ENCODE measurements at regions of chr17 and their contacts with region 1.

Region 1: GRCh38 chr17:27778193-27778592 is 22.1 kb downstream of the NOS2 start:
- DNase-seq: peak; percentile 81
- H3K4me3 ChIP-seq: no peak overlapping the region
- H3K27ac ChIP-seq: no peak overlapping the region
- H3K4me1 ChIP-seq: peaks cover 20% of the 10 kb centered on the region
- H3K27me3 ChIP-seq: no peaks in the 10 kb centered on the region
- CTCF ChIP-seq: no peak

Region 2: GRCh38 chr17:27793168-27793905 is 15.1 kb after region 1 on chr17:
- CTCF ChIA-PET with region 1: no interaction called
- dilution Hi-C with region 1: no loop called
- in situ Hi-C with region 1: no loop called
- intact Hi-C with region 1: no loop called
- DNase-seq: peak; percentile 8
- H3K4me3 ChIP-seq: no peak overlapping the region
- H3K27ac ChIP-seq: no peak overlapping the region
- H3K4me1 ChIP-seq: peaks cover 5% of the 10 kb centered on the region
- H3K27me3 ChIP-seq: peaks cover 4% of the 10 kb centered on the region
- CTCF ChIP-seq: no peak

Region 3: GRCh38 chr17:27818401-27819105 is 40.4 kb after region 1 on chr17:
- CTCF ChIA-PET with region 1: no interaction called
- dilution Hi-C with region 1: no loop called
- in situ Hi-C with region 1: no loop called
- intact Hi-C with region 1: no loop called
- DNase-seq: no peak
- H3K4me3 ChIP-seq: no peak overlapping the region
- H3K27ac ChIP-seq: no peak overlapping the region
- H3K4me1 ChIP-seq: no peaks in the 10 kb centered on the region
- H3K27me3 ChIP-seq: no peaks in the 10 kb centered on the region
- CTCF ChIP-seq: no peak

Region 4: GRCh38 chr17:28433721-28434120 is 655.5 kb after region 1 on chr17:
- CTCF ChIA-PET with region 1: no interaction called
- dilution Hi-C with region 1: loop called (anchors 10 kb)
- in situ Hi-C with region 1: no loop called
- intact Hi-C with region 1: no loop called
- DNase-seq: no peak
- H3K4me3 ChIP-seq: no peak overlapping the region
- H3K27ac ChIP-seq: no peak overlapping the region
- H3K4me1 ChIP-seq: no peaks in the 10 kb centered on the region
- H3K27me3 ChIP-seq: no peaks in the 10 kb centered on the region
- CTCF ChIP-seq: no peak

Measured in mammary epithelial cell (primary cell).